ENCODE measurements at regions of chr11 and their contacts with region 1.

Region 1: GRCh38 chr11:65134386-65135253 is at the start of gene SYVN1:
- DNase-seq: peak; percentile 79 to 97 (median 91)
- ATAC-seq: peak; percentile 88
- H3K4me3 ChIP-seq: peak within 1 kb of the TSS; percentile 83 to 85
- H3K4me3 Mint-ChIP-seq: peak within 1 kb of the TSS; percentile 99
- H3K27ac ChIP-seq: peak within 1 kb of the TSS; percentile 96 to 98
- H3K27ac Mint-ChIP-seq: peak within 1 kb of the TSS; percentile 100
- H3K4me1 ChIP-seq: peaks cover 33% of the 10 kb centered on the region
- H3K4me1 Mint-ChIP-seq: peaks cover 39% of the 10 kb centered on the region
- H3K27me3 ChIP-seq: no peaks in the 10 kb centered on the region
- H3K27me3 Mint-ChIP-seq: no peaks in the 10 kb centered on the region
- CTCF ChIP-seq: no peak
- total RNA-seq, gene SYVN1: 93.0 to 95.5 TPM

Region 2: GRCh38 chr11:65047581-65048422 is 86.8 kb before region 1 on chr11:
- CTCF ChIA-PET with region 1: no interaction called
- POLR2A ChIA-PET with region 1: no interaction called
- intact Hi-C with region 1: no loop called
- DNase-seq: peak in 7 of 9 experiments; percentile 7 to 67 (median 29)
- ATAC-seq: peak; percentile 68
- H3K4me3 ChIP-seq: peak overlapping the region; percentile 52 to 58
- H3K4me3 Mint-ChIP-seq: peak overlapping the region; percentile 85
- H3K27ac ChIP-seq: peak overlapping the region in 1 of 2 experiments; percentile 43
- H3K27ac Mint-ChIP-seq: peak overlapping the region; percentile 63
- H3K4me1 ChIP-seq: peaks cover 24% of the 10 kb centered on the region
- H3K4me1 Mint-ChIP-seq: peaks cover 19% of the 10 kb centered on the region
- H3K27me3 ChIP-seq: no peaks in the 10 kb centered on the region
- H3K27me3 Mint-ChIP-seq: no peaks in the 10 kb centered on the region
- CTCF ChIP-seq: no peak

Region 3: GRCh38 chr11:65083834-65084597 is 50.6 kb before region 1 on chr11 and contains the starts of genes CDCA5 and ZFPL1:
- CTCF ChIA-PET with region 1: no interaction called
- POLR2A ChIA-PET with region 1: interaction called, 3 read pairs
- intact Hi-C with region 1: loop called in 1 of 2 experiments (anchors 1 kb)
- DNase-seq: peak; percentile 94 to 98 (median 96)
- ATAC-seq: peak; percentile 88
- H3K4me3 ChIP-seq: peak within 1 kb of the TSS; percentile 71 to 87
- H3K4me3 Mint-ChIP-seq: peak within 1 kb of the TSS; percentile 93
- H3K27ac ChIP-seq: peak within 1 kb of the TSS; percentile 90 to 97
- H3K27ac Mint-ChIP-seq: peak within 1 kb of the TSS; percentile 99
- H3K4me1 ChIP-seq: peaks cover 17% of the 10 kb centered on the region
- H3K4me1 Mint-ChIP-seq: peaks cover 27% of the 10 kb centered on the region
- H3K27me3 ChIP-seq: no peaks in the 10 kb centered on the region
- H3K27me3 Mint-ChIP-seq: no peaks in the 10 kb centered on the region
- CTCF ChIP-seq: no peak
- total RNA-seq, gene CDCA5: 0.76 to 1.2 TPM
- total RNA-seq, gene ZFPL1: 52.3 to 52.6 TPM

Region 4: GRCh38 chr11:65095974-65096806 is 38.4 kb before region 1 on chr11 and contains the start of gene VPS51:
- CTCF ChIA-PET with region 1: interaction called, 3 read pairs
- POLR2A ChIA-PET with region 1: interaction called, 5 read pairs
- intact Hi-C with region 1: loop called in 1 of 2 experiments (anchors 1 kb)
- DNase-seq: peak; percentile 70 to 95 (median 85)
- ATAC-seq: peak; percentile 84
- H3K4me3 ChIP-seq: peak within 1 kb of the TSS; percentile 80 to 81
- H3K4me3 Mint-ChIP-seq: peak within 1 kb of the TSS; percentile 95
- H3K27ac ChIP-seq: peak within 1 kb of the TSS; percentile 82 to 89
- H3K27ac Mint-ChIP-seq: peak within 1 kb of the TSS; percentile 99
- H3K4me1 ChIP-seq: peaks cover 12% of the 10 kb centered on the region
- H3K4me1 Mint-ChIP-seq: peaks cover 24% of the 10 kb centered on the region
- H3K27me3 ChIP-seq: no peaks in the 10 kb centered on the region
- H3K27me3 Mint-ChIP-seq: no peaks in the 10 kb centered on the region
- CTCF ChIP-seq: no peak
- total RNA-seq, gene VPS51: 221 to 263 TPM

Region 5: GRCh38 chr11:65163684-65164083 is 29.1 kb after region 1 on chr11:
- CTCF ChIA-PET with region 1: no interaction called
- POLR2A ChIA-PET with region 1: no interaction called
- intact Hi-C with region 1: no loop called
- DNase-seq: no peak
- ATAC-seq: no peak
- H3K4me3 ChIP-seq: no peak overlapping the region
- H3K4me3 Mint-ChIP-seq: no peak overlapping the region
- H3K27ac ChIP-seq: no peak overlapping the region
- H3K27ac Mint-ChIP-seq: no peak overlapping the region
- H3K4me1 ChIP-seq: no peaks in the 10 kb centered on the region
- H3K4me1 Mint-ChIP-seq: no peaks in the 10 kb centered on the region
- H3K27me3 ChIP-seq: no peaks in the 10 kb centered on the region
- H3K27me3 Mint-ChIP-seq: peaks cover 8% of the 10 kb centered on the region
- CTCF ChIP-seq: no peak

Region 6: GRCh38 chr11:65180877-65181568 is 46.4 kb after region 1 on chr11:
- CTCF ChIA-PET with region 1: no interaction called
- POLR2A ChIA-PET with region 1: interaction called, 11 read pairs
- intact Hi-C with region 1: loop called in 1 of 2 experiments (anchors 1 kb)
- DNase-seq: peak; percentile 17 to 73 (median 53)
- ATAC-seq: peak; percentile 68
- H3K4me3 ChIP-seq: peak overlapping the region; percentile 85 to 95
- H3K4me3 Mint-ChIP-seq: peak overlapping the region; percentile 91
- H3K27ac ChIP-seq: peak overlapping the region in 1 of 2 experiments; percentile 23
- H3K27ac Mint-ChIP-seq: peak overlapping the region; percentile 80
- H3K4me1 ChIP-seq: peaks cover 24% of the 10 kb centered on the region
- H3K4me1 Mint-ChIP-seq: peaks cover 28% of the 10 kb centered on the region
- H3K27me3 ChIP-seq: no peaks in the 10 kb centered on the region
- H3K27me3 Mint-ChIP-seq: no peaks in the 10 kb centered on the region
- CTCF ChIP-seq: peak; percentile 57

Region 7: DNA sequence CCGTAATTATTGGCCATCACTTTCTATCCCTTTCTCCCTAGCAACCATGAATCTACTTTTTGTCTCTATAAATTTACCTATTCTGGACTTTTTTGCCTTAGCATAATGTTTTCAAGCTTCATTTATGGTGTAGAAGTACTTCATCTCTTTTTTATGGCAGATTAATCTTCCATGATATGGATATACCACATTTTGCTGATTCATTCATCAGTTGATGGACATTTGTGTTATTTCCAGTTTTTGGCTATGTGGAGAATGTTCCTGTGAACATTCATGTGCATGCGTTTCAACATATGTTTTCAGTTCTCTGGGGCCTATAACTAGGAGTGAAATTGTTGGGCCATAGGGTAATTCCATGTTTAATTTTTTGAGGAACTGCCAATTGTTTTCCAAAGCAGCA is 59.9 kb after region 1 on chr11:
- CTCF ChIA-PET with region 1: no interaction called
- POLR2A ChIA-PET with region 1: no interaction called
- intact Hi-C with region 1: no loop called
- DNase-seq: no peak
- ATAC-seq: no peak
- H3K4me3 ChIP-seq: no peak overlapping the region
- H3K4me3 Mint-ChIP-seq: no peak overlapping the region
- H3K27ac ChIP-seq: no peak overlapping the region
- H3K27ac Mint-ChIP-seq: no peak overlapping the region
- H3K4me1 ChIP-seq: no peaks in the 10 kb centered on the region
- H3K4me1 Mint-ChIP-seq: peaks cover 5% of the 10 kb centered on the region
- H3K27me3 ChIP-seq: no peaks in the 10 kb centered on the region
- H3K27me3 Mint-ChIP-seq: no peaks in the 10 kb centered on the region
- CTCF ChIP-seq: no peak

Region 8: DNA sequence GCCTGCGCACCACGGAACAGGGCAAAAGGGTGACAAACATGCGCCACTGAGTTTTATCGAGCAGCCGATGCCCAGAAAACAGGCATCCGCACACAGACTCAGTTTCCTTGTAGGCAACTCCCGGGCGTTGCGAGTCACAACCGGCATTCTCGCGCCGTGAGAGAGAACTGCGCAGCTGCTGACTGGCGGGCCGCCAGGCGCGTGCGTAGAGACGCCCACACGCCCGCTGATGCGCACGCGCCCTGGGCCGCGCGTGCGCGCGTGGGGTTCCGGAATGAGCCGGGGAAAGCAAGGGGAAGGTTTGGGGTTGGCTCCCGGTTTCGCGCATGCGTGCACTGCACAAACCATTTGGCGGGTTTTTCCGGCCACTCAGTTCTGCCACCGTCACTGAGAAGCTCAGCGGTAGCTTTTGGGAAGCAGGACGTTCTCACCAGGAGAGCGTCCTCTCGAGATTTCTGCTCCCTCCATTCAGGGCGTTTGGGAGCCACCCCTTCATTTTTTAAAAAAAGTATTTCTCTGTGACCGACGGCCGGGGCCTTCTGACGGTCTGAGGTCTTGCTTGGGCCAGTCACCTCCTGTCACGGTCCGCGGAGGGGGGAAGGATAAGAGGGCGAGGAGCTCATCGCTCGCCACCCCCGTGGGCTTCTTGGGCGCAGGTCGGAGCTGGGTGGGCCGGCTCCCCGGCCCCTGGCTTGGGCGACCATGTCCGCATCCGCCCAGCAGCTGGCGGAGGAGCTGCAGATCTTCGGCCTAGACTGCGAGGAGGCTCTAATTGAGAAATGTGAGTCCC is 127.2 kb after region 1 on chr11 and contains the start of gene POLA2:
- CTCF ChIA-PET with region 1: no interaction called
- POLR2A ChIA-PET with region 1: interaction called, 3 read pairs
- intact Hi-C with region 1: loop called (anchors 1 to 5 kb)
- DNase-seq: peak; percentile 90 to 99 (median 95)
- ATAC-seq: peak; percentile 95
- H3K4me3 ChIP-seq: peak within 1 kb of the TSS; percentile 79 to 85
- H3K4me3 Mint-ChIP-seq: peak within 1 kb of the TSS; percentile 93
- H3K27ac ChIP-seq: peak within 1 kb of the TSS; percentile 85 to 93
- H3K27ac Mint-ChIP-seq: peak within 1 kb of the TSS; percentile 95
- H3K4me1 ChIP-seq: peaks cover 14% of the 10 kb centered on the region
- H3K4me1 Mint-ChIP-seq: peaks cover 43% of the 10 kb centered on the region
- H3K27me3 ChIP-seq: no peaks in the 10 kb centered on the region
- H3K27me3 Mint-ChIP-seq: no peaks in the 10 kb centered on the region
- CTCF ChIP-seq: no peak
- total RNA-seq, gene POLA2: 8.5 to 9.3 TPM

Region 9: DNA sequence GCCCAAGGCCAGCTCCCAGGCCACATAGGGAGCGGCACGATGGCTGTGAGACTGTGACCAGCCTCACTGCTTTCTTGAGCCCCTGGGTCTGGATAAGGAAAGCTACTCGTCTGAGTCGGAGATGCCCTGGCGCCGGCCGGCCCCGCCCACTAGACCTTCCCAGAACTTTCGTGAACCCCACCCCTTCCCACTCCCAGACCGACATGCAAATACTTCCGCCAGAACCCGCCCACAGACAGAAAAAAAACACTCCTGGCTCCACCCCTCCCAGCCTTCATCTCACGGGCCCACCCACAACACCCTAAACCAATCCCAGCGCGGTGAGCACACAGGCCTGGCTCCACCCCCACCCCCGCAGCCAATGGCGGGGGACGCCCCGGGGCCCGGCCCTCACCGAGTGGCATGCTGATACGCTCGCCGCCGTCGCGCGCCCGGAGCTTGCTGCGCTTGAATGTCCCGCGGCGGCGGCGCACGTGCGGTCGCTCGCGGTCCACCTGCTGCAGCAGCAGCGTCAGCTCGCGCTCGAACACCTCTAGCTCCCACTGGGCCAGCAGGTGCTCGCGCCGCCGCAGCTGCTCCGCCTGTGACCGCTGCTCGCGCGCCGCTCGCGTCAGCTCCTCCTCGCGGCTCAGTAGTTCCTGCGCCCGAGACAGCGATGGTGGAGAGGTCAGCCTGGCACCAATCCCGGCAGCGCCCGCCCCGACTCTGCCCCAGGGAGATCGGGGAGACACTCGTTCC is 472.4 kb after region 1 on chr11:
- CTCF ChIA-PET with region 1: no interaction called
- POLR2A ChIA-PET with region 1: no interaction called
- intact Hi-C with region 1: no loop called
- DNase-seq: peak in 2 of 9 experiments; percentile 46
- ATAC-seq: peak; percentile 40
- H3K4me3 ChIP-seq: no peak overlapping the region
- H3K4me3 Mint-ChIP-seq: no peak overlapping the region
- H3K27ac ChIP-seq: no peak overlapping the region
- H3K27ac Mint-ChIP-seq: no peak overlapping the region
- H3K4me1 ChIP-seq: peaks cover 23% of the 10 kb centered on the region
- H3K4me1 Mint-ChIP-seq: peaks cover 29% of the 10 kb centered on the region
- H3K27me3 ChIP-seq: no peaks in the 10 kb centered on the region
- H3K27me3 Mint-ChIP-seq: no peaks in the 10 kb centered on the region
- CTCF ChIP-seq: no peak

Measured in CD8-positive, alpha-beta T cell (primary cell).